ENCODE measurements at regions of chr3 and their contacts with region 1.

Region 1: DNA sequence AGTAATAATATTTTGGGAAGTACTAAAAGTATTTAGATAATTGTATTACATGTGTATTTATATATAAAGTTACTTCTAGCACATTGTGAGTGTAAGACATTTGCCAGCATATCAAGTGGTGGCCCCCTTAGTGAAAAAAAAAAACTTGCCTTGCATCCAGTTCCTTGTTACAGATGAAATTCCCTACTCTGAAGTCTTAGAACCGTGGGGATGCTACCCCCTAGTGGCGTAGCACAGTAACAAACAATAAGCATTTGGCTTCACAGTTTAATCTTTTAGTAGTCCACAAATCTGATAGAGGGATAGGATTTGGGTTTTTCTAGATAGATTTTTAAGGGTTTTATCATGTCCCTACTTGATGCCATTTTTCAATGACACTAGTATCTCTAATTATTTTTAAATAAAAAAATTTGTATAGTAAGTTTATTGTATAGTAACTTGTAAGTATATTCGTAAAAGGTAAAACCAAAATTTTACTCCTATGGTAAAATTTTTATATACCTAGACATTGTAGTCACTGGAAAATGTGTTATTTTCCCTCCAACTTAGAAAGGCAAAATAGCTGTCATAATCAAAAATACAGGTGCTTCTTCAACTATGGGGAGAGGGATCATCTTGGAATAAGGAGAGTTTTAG is 14.3 kb downstream of the SMC4 start:
- DNase-seq: no peak

Region 2: DNA sequence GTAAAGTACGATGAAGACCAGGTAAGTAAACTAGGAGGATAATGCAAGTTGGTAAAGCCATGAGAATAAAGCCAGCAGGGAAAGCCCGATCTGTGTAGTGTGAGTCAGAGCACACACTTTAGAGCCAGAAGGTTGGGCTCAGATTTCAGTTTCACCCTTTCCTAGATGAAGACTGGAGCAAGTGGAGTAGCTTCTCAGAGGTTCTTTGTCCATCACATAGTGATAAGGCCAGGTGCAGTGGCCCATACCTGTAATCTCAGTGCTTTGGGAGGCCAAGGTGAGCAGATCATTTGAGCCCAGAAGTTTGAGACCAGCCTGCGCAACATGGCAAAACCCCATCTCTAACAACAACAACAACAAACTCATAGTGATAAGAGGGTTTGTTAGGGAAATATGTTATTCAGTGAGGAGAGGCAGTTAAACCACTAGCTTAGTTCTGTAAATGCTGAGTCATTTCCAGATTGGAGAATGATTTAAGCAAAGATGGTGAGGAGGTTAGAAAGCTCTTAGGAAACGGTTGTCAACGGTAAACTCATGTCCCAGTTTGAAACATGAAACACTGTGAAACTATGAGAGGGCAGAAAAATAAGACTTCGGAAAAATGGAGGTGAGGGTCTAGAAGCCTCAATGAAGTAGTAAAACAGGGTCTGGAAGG is 386.1 kb before region 1 on chr3:
- intact Hi-C with region 1: loop called (anchors 5 kb)
- DNase-seq: no peak

Region 3: GRCh38 chr3:160163229-160163878 is 250.4 kb before region 1 on chr3:
- intact Hi-C with region 1: loop called (anchors 2 kb)
- DNase-seq: no peak

Measured in cardiac septum (tissue), 1 donor.